Heart right ventricle (tissue), 16 donors: ENCODE measurements at regions of chr17 and their contacts with region 1.

Region 1: DNA sequence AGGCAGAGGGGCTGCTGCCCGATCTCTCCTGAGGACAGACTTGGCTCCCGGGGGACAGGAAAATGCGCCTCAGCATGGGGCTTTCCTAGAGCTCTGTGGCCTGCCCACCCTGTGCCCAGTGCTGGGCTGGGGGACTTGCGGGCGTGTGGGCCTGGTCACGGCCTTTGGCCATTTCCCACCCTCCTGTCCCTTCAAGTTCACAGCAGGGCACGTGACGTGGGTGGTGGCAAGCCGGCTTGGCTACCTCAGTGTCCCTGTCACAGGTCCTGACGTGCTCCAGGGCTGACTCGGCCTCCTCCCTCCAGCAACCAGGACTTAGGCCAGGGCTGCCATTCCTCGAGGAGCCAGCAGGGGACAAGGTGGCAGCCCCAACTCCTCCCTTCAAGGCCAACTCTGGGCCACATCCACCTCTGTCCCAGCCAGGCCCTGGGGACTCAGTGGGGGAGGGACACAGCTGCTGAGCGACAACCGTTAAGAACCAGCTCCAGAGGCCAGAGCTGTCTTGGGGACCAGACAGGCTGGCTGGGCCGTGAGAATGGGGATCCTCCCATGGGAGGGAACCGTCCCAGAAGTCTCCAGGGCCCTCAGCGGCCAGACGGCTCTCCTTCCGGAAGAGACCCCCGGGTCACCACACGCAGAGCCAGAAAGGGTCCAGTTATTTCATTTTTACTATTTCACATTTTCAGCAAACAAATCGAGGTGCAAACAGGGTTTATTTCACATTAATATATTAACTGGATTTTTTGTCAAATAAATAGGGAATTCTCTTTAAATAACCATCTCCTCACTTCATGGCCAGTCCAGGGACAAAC is 1.1 kb upstream of the UNC13D start:
- DNase-seq: peak; percentile 86 to 87
- ATAC-seq: peak; percentile 66 to 81 (median 79)
- H3K4me3 ChIP-seq: peak overlapping the region in 3 of 10 donors; percentile 19 to 64 (median 33)
- H3K27ac ChIP-seq: peak overlapping the region; percentile 65 to 97 (median 88)
- H3K4me1 ChIP-seq: peaks cover 40 to 68% (median 61%) of the 10 kb centered on the region in 9 donors
- H3K27me3 ChIP-seq: no peaks in the 10 kb centered on the region
- CTCF ChIP-seq: peak; percentile 69 to 86 (median 83)

Region 2: GRCh38 chr17:75767881-75768280 is 77.4 kb before region 1 on chr17:
- intact Hi-C with region 1: no loop called
- DNase-seq: no peak
- ATAC-seq: no peak
- H3K4me3 ChIP-seq: no peak overlapping the region
- H3K27ac ChIP-seq: no peak overlapping the region
- H3K4me1 ChIP-seq: peaks cover 5 to 21% (median 18%) of the 10 kb centered on the region in 9 donors
- H3K27me3 ChIP-seq: no peaks in the 10 kb centered on the region
- CTCF ChIP-seq: no peak

Region 3: DNA sequence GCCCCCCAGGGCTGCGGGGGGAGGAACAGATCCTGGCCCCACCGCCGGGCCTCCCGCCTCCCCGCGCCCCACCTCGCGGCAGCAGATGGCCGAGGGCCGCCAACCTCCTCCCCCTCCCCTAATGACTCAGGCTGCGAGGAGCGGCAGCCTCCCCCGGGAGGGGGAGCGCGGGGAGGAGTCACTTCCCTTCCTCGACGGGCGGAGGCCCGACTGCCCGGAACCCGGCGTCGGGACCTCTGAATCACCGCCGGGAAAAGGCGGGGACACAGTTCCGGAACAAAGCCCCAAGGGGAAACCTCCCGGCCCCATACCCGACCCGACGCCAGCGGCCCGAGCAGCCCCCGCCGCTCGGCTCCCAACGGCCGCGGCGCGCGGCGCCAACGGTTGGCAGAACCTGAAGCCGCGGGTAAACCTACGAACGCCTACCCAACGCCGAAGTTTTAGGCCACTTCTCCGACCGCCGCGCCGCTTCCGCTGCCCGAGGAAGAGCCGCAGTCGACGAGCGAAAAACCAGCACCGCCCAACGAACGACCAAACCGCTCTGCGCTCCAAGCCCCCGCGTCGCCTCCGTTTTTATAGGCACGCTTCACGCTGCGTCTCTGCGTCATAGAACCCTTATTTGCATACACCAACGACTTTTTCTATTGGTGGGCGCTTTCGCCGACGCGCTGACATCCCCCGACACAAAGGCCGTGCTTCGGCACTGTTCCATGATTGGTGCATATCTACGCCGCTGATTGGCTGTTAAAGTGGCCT is 65.8 kb before region 1 on chr17:
- intact Hi-C with region 1: loop called in 1 of 10 experiments (anchors 5 kb)
- DNase-seq: peak; percentile 94 to 98
- ATAC-seq: peak; percentile 82 to 87 (median 86)
- H3K4me3 ChIP-seq: peak overlapping the region; percentile 78 to 94 (median 88)
- H3K27ac ChIP-seq: peak overlapping the region; percentile 92 to 99 (median 99)
- H3K4me1 ChIP-seq: peaks cover 9 to 68% (median 52%) of the 10 kb centered on the region in 9 donors
- H3K27me3 ChIP-seq: no peaks in the 10 kb centered on the region
- CTCF ChIP-seq: no peak

Region 4: DNA sequence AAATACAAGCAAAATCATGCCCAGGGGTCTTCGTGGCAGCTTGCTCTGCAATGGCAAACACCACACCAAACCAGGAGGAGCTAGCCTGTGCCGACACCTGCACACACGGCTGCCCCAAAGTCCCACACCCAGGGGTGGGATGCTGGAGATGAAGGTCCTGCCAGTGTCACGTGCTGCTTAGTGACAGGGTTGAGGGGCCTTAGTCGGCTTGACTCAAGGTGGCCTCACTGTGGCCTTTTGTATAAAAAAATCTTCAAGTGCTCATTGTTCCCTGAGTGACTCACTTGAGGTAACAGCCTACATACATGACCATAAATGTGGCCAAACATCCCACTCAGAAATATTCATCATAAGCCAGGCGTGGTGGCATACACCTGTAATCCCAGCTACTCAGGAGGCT is 44.2 kb after region 1 on chr17:
- intact Hi-C with region 1: no loop called
- DNase-seq: no peak
- ATAC-seq: no peak
- H3K4me3 ChIP-seq: no peak overlapping the region
- H3K27ac ChIP-seq: no peak overlapping the region
- H3K4me1 ChIP-seq: peaks cover 0 to 17% (median 4%) of the 10 kb centered on the region in 9 donors
- H3K27me3 ChIP-seq: no peaks in the 10 kb centered on the region
- CTCF ChIP-seq: no peak

Region 5: GRCh38 chr17:75909812-75910274 is 64.6 kb after region 1 on chr17:
- intact Hi-C with region 1: no loop called
- DNase-seq: no peak
- ATAC-seq: peak in 3 of 8 donors; percentile 28 to 29 (median 28)
- H3K4me3 ChIP-seq: no peak overlapping the region
- H3K27ac ChIP-seq: no peak overlapping the region
- H3K4me1 ChIP-seq: peaks cover 0 to 17% (median 8%) of the 10 kb centered on the region in 9 donors
- H3K27me3 ChIP-seq: no peaks in the 10 kb centered on the region
- CTCF ChIP-seq: no peak

Region 6: GRCh38 chr17:76026714-76027158 is 181.5 kb after region 1 on chr17:
- intact Hi-C with region 1: no loop called
- DNase-seq: no peak
- ATAC-seq: peak in 1 of 8 donors; percentile 29
- H3K4me3 ChIP-seq: no peak overlapping the region
- H3K27ac ChIP-seq: no peak overlapping the region
- H3K4me1 ChIP-seq: peaks cover 0 to 11% (median 6%) of the 10 kb centered on the region in 9 donors
- H3K27me3 ChIP-seq: no peaks in the 10 kb centered on the region
- CTCF ChIP-seq: no peak